ENCODE measurements at regions of chr2 and their contacts with region 1.

Region 1: DNA sequence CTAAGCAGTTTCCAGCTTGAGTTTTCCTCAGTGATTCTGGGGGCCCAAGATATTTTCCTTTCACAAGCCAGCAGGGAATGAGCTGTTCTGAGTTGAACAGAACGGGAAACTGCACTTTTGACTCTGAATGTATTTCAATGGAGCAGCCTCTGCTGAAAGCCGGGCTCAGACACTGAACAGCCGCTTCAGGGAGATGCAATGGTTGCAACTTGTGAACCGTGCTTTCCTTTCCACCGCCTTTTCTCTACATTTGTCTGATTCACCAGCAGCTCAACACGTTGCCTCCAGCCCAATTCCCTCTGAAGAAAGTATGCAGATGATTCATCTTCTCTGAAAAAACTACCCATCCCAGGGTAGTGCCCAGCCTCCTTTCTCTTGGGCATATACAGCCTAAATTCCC is 119.3 kb upstream of the PKDCC start:
- DNase-seq: peak in 1 of 5 donors; percentile 26
- H3K4me3 ChIP-seq: no peak overlapping the region
- H3K27ac ChIP-seq: no peak overlapping the region
- H3K4me1 ChIP-seq: peaks cover 33% of the 10 kb centered on the region
- H3K27me3 ChIP-seq: no peaks in the 10 kb centered on the region
- CTCF ChIP-seq: no peak
- EP300 ChIP-seq: no peak
- POLR2A ChIP-seq: no peak

Region 2: GRCh38 chr2:41879235-41879916 is 49.1 kb before region 1 on chr2:
- intact Hi-C with region 1: loop called in 2 of 4 experiments (anchors 5 kb)
- DNase-seq: peak in 2 of 5 donors; percentile 41 to 43
- H3K4me3 ChIP-seq: no peak overlapping the region
- H3K27ac ChIP-seq: peak overlapping the region in 1 of 2 donors; percentile 62
- H3K4me1 ChIP-seq: peaks cover 13% of the 10 kb centered on the region
- H3K27me3 ChIP-seq: no peaks in the 10 kb centered on the region
- CTCF ChIP-seq: no peak
- EP300 ChIP-seq: no peak
- POLR2A ChIP-seq: no peak